ENCODE measurements at regions of chr17 and their contacts with region 1.

Region 1: GRCh38 chr17:73311781-73312641 is at the start of gene CDC42EP4:
- DNase-seq: peak; percentile 97
- H3K4me3 Mint-ChIP-seq: peak within 1 kb of the TSS; percentile 94
- H3K27ac Mint-ChIP-seq: peak within 1 kb of the TSS; percentile 93
- H3K4me1 Mint-ChIP-seq: peaks cover 27% of the 10 kb centered on the region
- H3K27me3 Mint-ChIP-seq: no peaks in the 10 kb centered on the region
- CTCF ChIP-seq: no peak
- total RNA-seq, gene CDC42EP4: 50.2 and 60.1 TPM in 2 replicates

Region 2: DNA sequence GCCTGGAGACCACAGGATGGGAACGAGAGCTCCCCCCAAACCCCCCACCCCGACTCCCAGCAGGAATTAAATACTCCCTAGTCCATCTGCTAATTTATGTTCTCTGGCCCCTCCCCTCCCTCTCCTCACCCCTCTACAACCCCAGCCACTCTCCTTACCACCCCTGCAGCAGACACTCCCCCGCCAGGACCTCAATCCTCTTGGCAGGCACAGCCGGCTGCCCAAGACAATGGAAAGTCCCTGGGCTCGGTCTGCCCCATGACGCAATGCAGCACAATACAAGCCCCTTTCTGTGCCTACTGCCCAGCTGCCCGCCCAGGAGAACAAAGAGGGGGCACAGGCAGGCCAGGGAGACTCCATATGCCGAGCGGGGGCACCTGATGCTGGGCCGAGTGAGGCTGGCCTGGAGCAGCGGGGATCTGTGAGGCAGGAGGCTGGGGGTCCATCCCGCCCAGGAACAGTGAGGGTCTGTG is 30.1 kb after region 1 on chr17:
- CTCF ChIA-PET with region 1: interaction called, 24 read pairs
- intact Hi-C with region 1: loop called (anchors 2 kb)
- DNase-seq: peak; percentile 87
- H3K4me3 Mint-ChIP-seq: peak overlapping the region; percentile 30
- H3K27ac Mint-ChIP-seq: peak overlapping the region; percentile 64
- H3K4me1 Mint-ChIP-seq: peaks cover 25% of the 10 kb centered on the region
- H3K27me3 Mint-ChIP-seq: no peaks in the 10 kb centered on the region
- CTCF ChIP-seq: no peak

Region 3: DNA sequence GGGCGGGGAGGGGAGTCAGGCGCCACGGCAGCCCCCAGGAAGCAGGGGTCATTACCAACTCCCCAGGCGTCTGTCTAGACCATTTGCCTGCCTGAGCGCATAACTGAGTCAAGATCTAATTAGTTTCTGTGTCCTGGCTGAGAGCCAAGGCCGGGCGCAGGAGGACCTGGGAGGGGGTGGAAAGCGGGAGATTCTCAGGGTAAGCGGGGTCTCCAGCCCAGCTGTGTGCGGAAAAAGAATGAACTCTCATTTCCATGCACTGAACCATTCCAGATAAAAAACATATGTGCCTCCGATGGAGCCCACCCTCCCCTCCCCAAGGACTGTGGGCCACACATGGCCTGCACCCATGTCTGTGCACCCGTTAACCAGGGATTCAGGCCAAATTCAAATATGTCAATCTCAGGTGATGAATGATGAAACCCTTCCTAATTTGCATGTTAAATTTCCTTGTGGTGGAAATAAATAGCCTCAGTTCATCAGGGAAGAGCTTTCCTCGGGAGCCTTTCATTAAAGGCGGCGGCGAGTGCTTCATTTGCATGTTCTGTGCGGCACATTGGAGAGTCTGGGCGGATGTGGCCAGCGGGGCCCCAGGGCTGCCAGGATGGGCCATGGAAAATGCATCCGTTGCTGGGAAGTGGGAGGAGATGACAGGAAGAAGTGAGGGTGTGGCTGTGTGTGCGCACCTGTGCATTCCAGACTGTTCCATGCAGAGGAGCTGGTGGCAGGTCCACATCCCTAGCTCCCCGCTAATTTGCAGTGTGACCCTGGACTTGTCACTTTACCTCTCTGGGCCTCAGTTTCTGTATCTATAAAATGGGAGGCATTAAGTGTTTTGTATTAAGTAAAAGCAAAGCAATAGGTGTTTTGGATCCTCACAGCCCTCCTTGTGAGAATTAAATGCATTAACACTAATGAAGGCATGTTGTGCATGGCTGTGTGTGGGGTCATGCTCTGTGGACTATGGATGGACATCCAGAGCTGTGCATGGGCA is 181.1 kb after region 1 on chr17:
- CTCF ChIA-PET with region 1: no interaction called
- intact Hi-C with region 1: no loop called
- DNase-seq: no peak
- H3K4me3 Mint-ChIP-seq: no peak overlapping the region
- H3K27ac Mint-ChIP-seq: no peak overlapping the region
- H3K4me1 Mint-ChIP-seq: no peaks in the 10 kb centered on the region
- H3K27me3 Mint-ChIP-seq: peaks cover 100% of the 10 kb centered on the region
- CTCF ChIP-seq: no peak